Caco-2 (cell line): ENCODE measurements at regions of chr7 and their contacts with region 1.

Region 1: GRCh38 chr7:16695621-16696237 is 49.7 kb downstream of the BZW2 start:
- DNase-seq: peak; percentile 54 to 67
- H3K4me3 ChIP-seq: no peak overlapping the region
- H3K4me3 Mint-ChIP-seq: no peak overlapping the region
- H3K27ac Mint-ChIP-seq: no peak overlapping the region
- H3K4me1 ChIP-seq: no peaks in the 10 kb centered on the region
- H3K4me1 Mint-ChIP-seq: no peaks in the 10 kb centered on the region
- H3K27me3 ChIP-seq: no peaks in the 10 kb centered on the region
- H3K27me3 Mint-ChIP-seq: no peaks in the 10 kb centered on the region
- CTCF ChIP-seq: peak; percentile 68 to 71

Region 2: GRCh38 chr7:16753102-16753931 is 57.6 kb after region 1 on chr7 and contains the start of gene TSPAN13:
- CTCF ChIA-PET with region 1: no interaction called
- POLR2A ChIA-PET with region 1: no interaction called
- intact Hi-C with region 1: loop called (anchors 1 kb)
- DNase-seq: peak; percentile 98 to 99
- H3K4me3 ChIP-seq: peak within 1 kb of the TSS; percentile 91
- H3K4me3 Mint-ChIP-seq: peak within 1 kb of the TSS; percentile 92
- H3K27ac Mint-ChIP-seq: peak within 1 kb of the TSS; percentile 91
- H3K4me1 ChIP-seq: peaks cover 20% of the 10 kb centered on the region
- H3K4me1 Mint-ChIP-seq: peaks cover 20% of the 10 kb centered on the region
- H3K27me3 ChIP-seq: no peaks in the 10 kb centered on the region
- H3K27me3 Mint-ChIP-seq: no peaks in the 10 kb centered on the region
- CTCF ChIP-seq: no peak
- total RNA-seq, gene TSPAN13: 193 and 208 TPM in 2 replicates